HEK293 (cell line): ENCODE measurements at regions of chr9 and their contacts with region 1.

Region 1: DNA sequence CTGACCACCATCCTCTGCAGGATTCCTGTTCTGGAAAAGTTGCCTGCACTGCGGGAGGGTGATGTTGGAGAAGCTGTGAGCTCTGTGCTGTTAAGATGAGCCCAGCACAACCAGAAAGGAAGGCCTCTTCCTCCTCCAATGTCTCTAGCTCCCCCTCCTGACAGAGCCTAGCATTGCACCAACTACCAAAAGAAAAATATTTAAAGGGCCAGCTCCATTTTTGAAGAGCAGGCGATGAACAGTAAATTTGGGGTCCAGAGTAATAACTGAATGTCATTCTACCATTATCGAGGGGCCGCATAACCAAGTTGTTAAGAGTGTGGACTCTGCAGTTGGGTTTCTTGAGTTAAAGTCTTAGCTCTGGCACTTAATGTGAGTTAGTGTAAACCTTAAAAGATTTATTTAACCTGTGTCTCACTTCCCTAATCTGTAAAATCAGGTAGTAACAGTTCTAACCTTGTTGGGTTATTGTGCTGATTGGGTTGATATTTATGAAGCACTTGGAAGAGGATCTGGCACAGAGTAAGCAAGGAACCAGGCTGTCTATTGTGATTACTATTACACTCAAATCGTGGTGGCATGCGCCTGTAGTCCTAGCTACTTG is 3.9 kb downstream of the TEX53 start:
- H3K4me3 ChIP-seq: no peak overlapping the region
- H3K27ac ChIP-seq: no peak overlapping the region
- H3K4me1 ChIP-seq: no peaks in the 10 kb centered on the region
- CTCF ChIP-seq: peak; percentile 45; the same call in 1 of the 2 replicates

Region 2: GRCh38 chr9:114405294-114406034 is 248.2 kb before region 1 on chr9:
- CTCF ChIA-PET with region 1: interaction called, 120 read pairs
- POLR2A ChIA-PET with region 1: interaction called, 4 read pairs
- H3K4me3 ChIP-seq: no peak overlapping the region
- H3K27ac ChIP-seq: no peak overlapping the region
- H3K4me1 ChIP-seq: no peaks in the 10 kb centered on the region
- CTCF ChIP-seq: peak; percentile 81

Region 3: DNA sequence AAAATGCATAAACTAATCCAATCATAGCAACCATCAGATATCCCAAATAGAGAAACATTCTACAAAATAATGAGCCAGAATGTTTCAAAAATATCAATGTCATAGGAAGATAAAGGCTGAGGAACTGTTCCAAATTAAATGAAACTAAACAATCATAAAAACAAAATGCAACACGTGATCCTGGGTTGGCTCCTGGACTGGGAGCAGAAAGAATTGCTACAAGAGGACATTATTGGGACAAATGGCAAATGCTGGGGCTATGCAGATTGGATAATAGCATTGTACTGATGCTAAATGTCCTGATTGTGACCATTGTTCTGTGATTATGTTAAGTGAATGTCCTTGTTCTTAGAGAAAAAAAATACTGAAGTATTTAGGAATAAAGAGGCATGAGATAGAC is 211.6 kb before region 1 on chr9:
- CTCF ChIA-PET with region 1: interaction called, 71 read pairs
- POLR2A ChIA-PET with region 1: no interaction called
- H3K4me3 ChIP-seq: no peak overlapping the region
- H3K27ac ChIP-seq: no peak overlapping the region
- H3K4me1 ChIP-seq: no peaks in the 10 kb centered on the region
- CTCF ChIP-seq: no peak

Region 4: GRCh38 chr9:114493521-114494184 is 160.0 kb before region 1 on chr9:
- CTCF ChIA-PET with region 1: interaction called, 128 read pairs
- POLR2A ChIA-PET with region 1: no interaction called
- H3K4me3 ChIP-seq: no peak overlapping the region
- H3K27ac ChIP-seq: no peak overlapping the region
- H3K4me1 ChIP-seq: no peaks in the 10 kb centered on the region
- CTCF ChIP-seq: no peak

Region 5: GRCh38 chr9:114587385-114588202 is 66.1 kb before region 1 on chr9 and contains the start of gene ATP6V1G1:
- CTCF ChIA-PET with region 1: interaction called, 5 read pairs
- POLR2A ChIA-PET with region 1: interaction called, 10 read pairs
- H3K4me3 ChIP-seq: peak within 1 kb of the TSS; percentile 86
- H3K27ac ChIP-seq: peak within 1 kb of the TSS; percentile 54; the same call in 1 of the 2 replicates
- H3K4me1 ChIP-seq: no peaks in the 10 kb centered on the region
- CTCF ChIP-seq: peak; percentile 20; the same call in 1 of the 2 replicates